ENCODE measurements at regions of chr14 and their contacts with region 1.

Region 1: GRCh38 chr14:94439453-94440057 is 13.0 kb downstream of the SERPINA11 start:
- DNase-seq: no peak
- H3K4me3 ChIP-seq: no peak overlapping the region
- H3K27ac ChIP-seq: no peak overlapping the region
- H3K4me1 ChIP-seq: no peaks in the 10 kb centered on the region
- H3K27me3 ChIP-seq: no peaks in the 10 kb centered on the region
- CTCF ChIP-seq: peak in 1 of 2 donors; percentile 3

Region 2: DNA sequence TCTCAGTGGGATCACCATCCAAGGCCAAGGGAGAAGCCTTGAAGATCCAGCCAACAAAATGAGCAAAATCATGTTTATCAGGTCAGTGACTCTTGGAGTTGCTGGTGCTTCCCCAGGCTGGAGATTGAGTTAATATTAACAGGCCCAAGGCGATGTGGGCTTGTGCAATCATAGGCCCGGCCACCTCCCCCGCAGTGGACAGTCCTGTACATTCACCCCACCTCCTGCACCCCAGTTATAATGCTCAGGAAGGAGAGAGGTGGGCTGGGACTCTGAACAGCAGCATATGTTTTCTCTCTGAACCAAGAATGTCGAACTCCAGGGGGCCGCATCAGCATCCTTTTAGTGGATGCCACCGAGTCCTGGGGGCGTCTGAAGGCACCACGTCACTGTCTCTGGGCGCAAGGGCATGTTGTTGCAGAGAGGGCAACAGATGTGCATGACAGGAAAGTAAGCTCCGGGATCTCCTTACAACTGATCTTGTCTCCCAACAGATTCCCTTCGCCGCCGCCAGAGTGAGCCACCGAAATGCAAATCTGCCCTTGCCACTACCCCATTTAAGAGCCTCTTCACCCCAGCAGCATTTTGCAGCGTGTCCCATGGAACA is 84.3 kb before region 1 on chr14:
- CTCF ChIA-PET with region 1: no interaction called
- dilution Hi-C with region 1: no loop called
- in situ Hi-C with region 1: no loop called
- intact Hi-C with region 1: loop called (anchors 2 kb)
- DNase-seq: peak; percentile 66
- H3K4me3 ChIP-seq: no peak overlapping the region
- H3K27ac ChIP-seq: no peak overlapping the region
- H3K4me1 ChIP-seq: peaks cover 12% of the 10 kb centered on the region
- H3K27me3 ChIP-seq: no peaks in the 10 kb centered on the region
- CTCF ChIP-seq: peak; percentile 47 to 79

Region 3: DNA sequence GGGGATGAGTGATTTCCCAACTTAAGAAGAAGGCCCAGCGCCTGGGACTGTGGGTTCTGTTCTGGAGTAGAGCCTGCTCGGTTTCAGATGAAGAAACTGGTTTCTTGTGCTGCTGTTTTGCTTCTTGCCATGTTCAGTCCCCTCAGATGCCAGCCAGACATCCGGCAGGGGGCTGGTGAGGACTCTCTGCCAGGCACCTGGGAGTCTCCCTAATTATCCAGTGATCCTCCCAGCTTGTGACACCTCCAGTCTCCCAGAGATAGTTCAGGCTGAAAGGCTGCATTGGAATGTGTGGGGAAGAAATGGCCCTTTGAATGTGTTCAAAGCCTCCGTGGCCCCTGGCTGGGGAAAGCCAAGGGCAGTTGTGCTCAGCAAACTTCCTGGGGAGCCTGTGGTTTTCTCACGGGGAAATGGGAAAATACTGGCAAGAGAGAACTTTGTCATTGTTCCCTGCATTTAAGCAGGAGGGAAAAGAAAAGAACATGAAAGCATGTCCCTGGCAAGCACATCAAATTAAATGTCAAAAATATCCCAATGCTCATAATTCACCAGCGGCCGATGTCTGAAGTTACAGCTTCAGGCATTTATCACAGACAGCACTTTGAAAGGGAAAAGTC is 78.2 kb after region 1 on chr14:
- CTCF ChIA-PET with region 1: no interaction called
- dilution Hi-C with region 1: loop called (anchors 5 kb)
- in situ Hi-C with region 1: no loop called
- intact Hi-C with region 1: no loop called
- DNase-seq: no peak
- H3K4me3 ChIP-seq: no peak overlapping the region
- H3K27ac ChIP-seq: no peak overlapping the region
- H3K4me1 ChIP-seq: no peaks in the 10 kb centered on the region
- H3K27me3 ChIP-seq: peaks cover 2% of the 10 kb centered on the region
- CTCF ChIP-seq: no peak

Region 4: GRCh38 chr14:94536823-94537222 is 97.3 kb after region 1 on chr14:
- CTCF ChIA-PET with region 1: no interaction called
- dilution Hi-C with region 1: no loop called
- in situ Hi-C with region 1: loop called in 1 of 2 experiments (anchors 10 kb)
- intact Hi-C with region 1: loop called (anchors 2 kb)
- DNase-seq: peak; percentile 40
- H3K4me3 ChIP-seq: no peak overlapping the region
- H3K27ac ChIP-seq: no peak overlapping the region
- H3K4me1 ChIP-seq: peaks cover 4% of the 10 kb centered on the region
- H3K27me3 ChIP-seq: no peaks in the 10 kb centered on the region
- CTCF ChIP-seq: peak; percentile 27 to 38

Region 5: DNA sequence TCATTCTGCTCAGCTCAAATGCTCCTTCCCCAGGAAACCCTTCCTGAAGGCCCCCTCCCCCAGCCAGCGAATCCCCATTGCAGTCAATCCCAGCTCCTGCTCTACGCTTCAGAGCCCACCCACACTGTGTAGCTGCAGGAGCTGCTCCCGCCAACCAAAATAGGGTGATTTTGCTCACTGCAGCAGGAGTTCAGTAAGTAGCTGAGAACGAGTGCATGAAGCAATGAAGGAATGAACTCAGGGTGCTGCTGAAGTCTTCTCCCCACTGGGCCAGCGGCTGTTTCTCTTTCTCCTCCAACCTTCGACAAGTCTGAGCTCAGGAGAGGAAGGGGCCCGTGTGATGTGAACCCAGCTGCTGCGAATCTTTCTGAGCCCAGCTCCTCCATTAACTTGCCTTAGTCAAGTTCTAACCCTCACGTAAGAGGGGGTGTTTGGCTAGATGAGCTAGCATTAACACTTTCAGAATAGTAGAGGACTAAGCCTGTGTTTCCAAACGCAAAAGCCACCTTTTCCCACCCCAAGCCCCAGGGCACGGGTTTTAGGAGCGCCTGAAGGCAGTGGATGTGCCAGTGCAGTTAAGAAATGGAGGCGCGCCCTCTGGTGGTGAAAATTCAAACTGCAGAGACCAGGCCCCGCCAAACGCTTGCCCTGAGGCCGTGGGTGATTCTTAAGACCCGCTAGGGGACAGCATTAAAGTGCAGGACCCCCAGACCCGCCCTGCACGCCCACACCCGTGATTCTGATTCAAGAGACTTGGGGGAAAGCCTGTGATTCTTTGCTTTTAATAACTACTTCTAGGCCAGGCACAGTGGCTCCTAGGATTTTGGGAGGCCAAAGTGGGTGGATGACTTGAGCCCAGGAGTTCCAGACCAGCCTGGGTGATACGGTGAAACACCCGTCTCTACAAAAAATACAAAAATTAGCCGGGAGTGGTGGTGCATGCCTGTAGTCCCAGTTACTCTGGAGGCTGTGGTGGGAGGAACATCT is 109.7 kb after region 1 on chr14:
- CTCF ChIA-PET with region 1: no interaction called
- dilution Hi-C with region 1: no loop called
- in situ Hi-C with region 1: loop called in 1 of 2 experiments (anchors 10 kb)
- intact Hi-C with region 1: loop called (anchors 1 kb)
- DNase-seq: peak; percentile 21
- H3K4me3 ChIP-seq: no peak overlapping the region
- H3K27ac ChIP-seq: no peak overlapping the region
- H3K4me1 ChIP-seq: no peaks in the 10 kb centered on the region
- H3K27me3 ChIP-seq: no peaks in the 10 kb centered on the region
- CTCF ChIP-seq: peak; percentile 81 to 84

Region 6: GRCh38 chr14:94681300-94682060 is 241.9 kb after region 1 on chr14:
- CTCF ChIA-PET with region 1: no interaction called
- dilution Hi-C with region 1: no loop called
- in situ Hi-C with region 1: no loop called
- intact Hi-C with region 1: loop called (anchors 1 kb)
- DNase-seq: peak; percentile 64
- H3K4me3 ChIP-seq: no peak overlapping the region
- H3K27ac ChIP-seq: no peak overlapping the region
- H3K4me1 ChIP-seq: peaks cover 10% of the 10 kb centered on the region
- H3K27me3 ChIP-seq: no peaks in the 10 kb centered on the region
- CTCF ChIP-seq: peak; percentile 79 to 91

Measured in mammary epithelial cell (primary cell).